Gastrocnemius medialis (tissue), 4 donors: ENCODE measurements at regions of chrX and their contacts with region 1.

Region 1: DNA sequence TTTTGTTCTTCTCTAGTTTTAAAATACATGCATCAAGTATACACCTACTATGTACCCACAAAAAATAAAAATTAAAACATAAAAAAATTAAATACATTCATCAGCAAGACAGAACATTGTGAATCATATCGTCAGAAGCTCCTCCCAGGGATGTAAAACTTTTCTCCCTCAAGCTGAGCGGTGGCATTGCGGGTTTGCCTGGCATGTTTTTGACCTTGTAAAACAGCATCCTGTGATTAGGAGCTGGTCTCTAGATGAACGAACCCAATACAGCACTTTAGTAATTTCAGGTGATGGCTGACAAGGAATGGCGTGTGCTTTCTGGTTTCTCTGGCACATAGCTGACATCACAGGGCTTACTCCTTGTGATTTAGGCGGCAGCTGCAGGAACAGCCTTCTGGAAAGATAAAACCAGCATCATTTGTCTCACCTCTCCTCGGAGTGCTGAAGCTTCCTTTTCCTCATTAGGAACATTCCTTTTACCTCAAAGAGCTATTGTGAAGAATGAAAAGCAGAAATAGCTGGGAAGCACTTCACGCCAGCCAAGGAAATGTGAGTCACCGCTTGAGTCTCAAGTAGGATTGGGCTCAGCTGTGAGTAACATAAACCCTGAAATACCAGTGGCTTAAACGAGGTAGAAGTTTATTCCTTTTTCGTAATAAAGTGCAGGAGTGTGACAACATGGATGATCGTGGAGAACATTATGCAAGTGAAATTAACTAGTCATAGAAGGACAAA is 44.3 kb downstream of the NYX start:
- DNase-seq: peak; percentile 30 to 45
- ATAC-seq: peak; percentile 91 to 94
- H3K4me3 ChIP-seq: no peak overlapping the region
- H3K27ac ChIP-seq: peak overlapping the region; percentile 58 to 72 (median 69)
- H3K4me1 ChIP-seq: peaks cover 0 to 7% of the 10 kb centered on the region in 2 donors
- H3K27me3 ChIP-seq: peaks cover 0 to 4% (median 0%) of the 10 kb centered on the region in 3 donors
- CTCF ChIP-seq: no peak
- POLR2A ChIP-seq: no peak

Region 2: GRCh38 chrX:41209853-41210252 is 281.6 kb before region 1 on chrX:
- in situ Hi-C with region 1: no loop called
- intact Hi-C with region 1: no loop called
- DNase-seq: no peak
- ATAC-seq: no peak
- H3K4me3 ChIP-seq: no peak overlapping the region
- H3K27ac ChIP-seq: no peak overlapping the region
- H3K4me1 ChIP-seq: no peaks in the 10 kb centered on the region
- H3K27me3 ChIP-seq: peaks cover 0 to 4% (median 0%) of the 10 kb centered on the region in 3 donors
- CTCF ChIP-seq: no peak
- POLR2A ChIP-seq: no peak

Region 3: DNA sequence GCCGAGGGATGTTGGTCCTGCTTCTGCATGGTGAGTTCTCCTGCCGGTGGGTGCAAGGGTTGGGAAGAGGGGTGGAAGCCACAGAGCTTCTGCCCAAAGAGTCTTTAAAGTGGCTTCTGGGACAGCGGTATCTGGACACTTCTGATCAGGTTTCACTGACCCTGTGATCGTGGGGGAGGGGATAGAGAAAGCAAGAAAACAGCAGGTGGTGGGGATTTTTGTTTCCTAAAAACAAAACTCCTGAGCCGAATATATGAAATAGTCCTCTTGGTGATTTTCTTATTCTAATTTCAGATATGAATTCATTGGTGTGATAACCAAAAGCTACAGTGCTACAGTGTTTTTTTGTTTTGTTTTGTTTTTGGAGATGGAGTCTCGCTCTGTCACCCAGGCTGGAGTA is 43.5 kb before region 1 on chrX:
- in situ Hi-C with region 1: no loop called
- intact Hi-C with region 1: loop called (anchors 1 kb)
- DNase-seq: no peak
- ATAC-seq: peak in 1 of 2 donors; percentile 32
- H3K4me3 ChIP-seq: no peak overlapping the region
- H3K27ac ChIP-seq: peak overlapping the region in 3 of 4 donors; percentile 37 to 85 (median 77)
- H3K4me1 ChIP-seq: peaks cover 19 to 24% of the 10 kb centered on the region in 2 donors
- H3K27me3 ChIP-seq: no peaks in the 10 kb centered on the region
- CTCF ChIP-seq: no peak
- POLR2A ChIP-seq: no peak